AG04449 (cell line): ENCODE measurements at regions of chr2 and their contacts with region 1.

Region 1: GRCh38 chr2:174748948-174749347 is 15.3 kb downstream of the CHRNA1 start:
- DNase-seq: no peak
- H3K4me3 ChIP-seq: no peak overlapping the region
- CTCF ChIP-seq: peak; percentile 72

Region 2: DNA sequence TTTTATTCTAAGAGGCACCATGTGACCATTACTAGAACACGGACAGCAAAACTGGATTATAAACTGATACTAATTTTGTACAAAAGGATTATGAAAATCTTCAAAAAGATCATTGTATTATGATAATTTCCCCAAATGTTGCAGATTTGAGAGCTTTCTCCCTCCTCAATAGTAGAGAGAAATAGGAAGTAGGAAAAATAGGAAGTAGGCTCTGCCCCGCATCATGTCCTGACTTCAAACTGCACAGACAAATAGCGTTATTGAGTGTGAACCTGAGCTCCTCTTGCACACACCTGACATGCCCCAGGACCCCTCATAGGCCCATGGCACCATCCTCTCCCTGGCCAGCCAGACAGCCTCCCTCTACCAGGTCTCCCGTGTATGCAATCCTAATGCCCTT is 10.1 kb before region 1 on chr2:
- CTCF ChIA-PET with region 1: interaction called, 38 read pairs
- POLR2A ChIA-PET with region 1: no interaction called
- DNase-seq: no peak
- H3K4me3 ChIP-seq: no peak overlapping the region
- CTCF ChIP-seq: no peak

Region 3: GRCh38 chr2:174997110-174997509 is 248.2 kb after region 1 on chr2:
- CTCF ChIA-PET with region 1: interaction called, 345 read pairs
- POLR2A ChIA-PET with region 1: no interaction called
- DNase-seq: no peak
- H3K4me3 ChIP-seq: no peak overlapping the region
- CTCF ChIP-seq: no peak

Region 4: DNA sequence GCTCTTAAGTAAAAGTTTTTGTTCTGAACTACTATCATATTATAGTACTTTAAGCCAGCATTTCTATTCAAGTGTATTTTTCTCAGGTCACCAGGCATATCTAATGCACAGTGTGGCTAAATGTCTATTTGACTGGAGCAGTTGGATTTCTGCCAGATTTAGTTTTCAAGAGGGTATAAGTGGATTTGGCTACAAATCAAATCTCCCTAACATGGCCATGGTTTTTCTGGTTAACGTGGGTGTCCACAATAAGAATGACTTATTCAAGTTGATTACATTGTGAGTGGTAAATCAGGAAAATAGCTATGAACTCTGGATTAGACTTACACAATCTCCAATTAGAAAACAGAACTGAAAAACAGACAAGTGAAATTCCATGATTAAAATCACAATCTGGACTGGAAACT is 261.9 kb after region 1 on chr2:
- CTCF ChIA-PET with region 1: interaction called, 33 read pairs
- POLR2A ChIA-PET with region 1: no interaction called
- DNase-seq: no peak
- H3K4me3 ChIP-seq: no peak overlapping the region
- CTCF ChIP-seq: no peak